Activated CD8-positive, alpha-beta T cell treated with anti-CD3 and anti-CD28 coated beads for 36 hours (primary cell): ENCODE measurements at regions of chr2 and their contacts with region 1.

Region 1: GRCh38 chr2:64214281-64215115 is 70.3 kb upstream of the PELI1 start:
- DNase-seq: peak; percentile 45
- ATAC-seq: peak; percentile 67
- H3K4me3 Mint-ChIP-seq: peak overlapping the region; percentile 63
- H3K27ac Mint-ChIP-seq: peak overlapping the region; percentile 97
- H3K4me1 Mint-ChIP-seq: peaks cover 55% of the 10 kb centered on the region
- H3K27me3 Mint-ChIP-seq: no peaks in the 10 kb centered on the region
- CTCF ChIP-seq: no peak

Region 2: GRCh38 chr2:64036034-64036705 is 178.3 kb before region 1 on chr2:
- CTCF ChIA-PET with region 1: no interaction called
- POLR2A ChIA-PET with region 1: no interaction called
- intact Hi-C with region 1: loop called (anchors 5 kb)
- DNase-seq: peak; percentile 47
- ATAC-seq: peak; percentile 93
- H3K4me3 Mint-ChIP-seq: peak overlapping the region; percentile 47
- H3K27ac Mint-ChIP-seq: peak overlapping the region; percentile 84
- H3K4me1 Mint-ChIP-seq: peaks cover 44% of the 10 kb centered on the region
- H3K27me3 Mint-ChIP-seq: no peaks in the 10 kb centered on the region
- CTCF ChIP-seq: no peak

Region 3: DNA sequence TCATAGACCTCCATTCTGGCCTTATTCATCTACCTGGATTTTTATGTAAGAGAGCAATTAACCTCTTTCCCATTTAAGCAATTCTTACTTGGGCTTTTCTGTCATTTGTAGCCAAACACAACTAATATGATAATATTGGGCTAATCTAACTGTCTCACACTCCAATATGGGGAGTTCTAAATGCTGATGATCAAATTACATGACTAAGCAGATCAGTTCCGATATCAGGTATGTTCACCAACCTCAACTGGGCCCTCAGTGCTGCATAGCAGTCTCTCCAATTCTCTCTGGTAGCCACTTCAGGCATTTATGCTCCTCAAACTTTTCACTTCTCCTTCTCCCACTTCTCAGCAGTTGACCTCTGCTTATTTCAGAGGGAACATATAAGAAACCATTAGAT is 134.3 kb before region 1 on chr2:
- CTCF ChIA-PET with region 1: no interaction called
- POLR2A ChIA-PET with region 1: no interaction called
- intact Hi-C with region 1: no loop called
- DNase-seq: no peak
- ATAC-seq: no peak
- H3K4me3 Mint-ChIP-seq: no peak overlapping the region
- H3K27ac Mint-ChIP-seq: no peak overlapping the region
- H3K4me1 Mint-ChIP-seq: no peaks in the 10 kb centered on the region
- H3K27me3 Mint-ChIP-seq: peaks cover 2% of the 10 kb centered on the region
- CTCF ChIP-seq: no peak

Region 4: DNA sequence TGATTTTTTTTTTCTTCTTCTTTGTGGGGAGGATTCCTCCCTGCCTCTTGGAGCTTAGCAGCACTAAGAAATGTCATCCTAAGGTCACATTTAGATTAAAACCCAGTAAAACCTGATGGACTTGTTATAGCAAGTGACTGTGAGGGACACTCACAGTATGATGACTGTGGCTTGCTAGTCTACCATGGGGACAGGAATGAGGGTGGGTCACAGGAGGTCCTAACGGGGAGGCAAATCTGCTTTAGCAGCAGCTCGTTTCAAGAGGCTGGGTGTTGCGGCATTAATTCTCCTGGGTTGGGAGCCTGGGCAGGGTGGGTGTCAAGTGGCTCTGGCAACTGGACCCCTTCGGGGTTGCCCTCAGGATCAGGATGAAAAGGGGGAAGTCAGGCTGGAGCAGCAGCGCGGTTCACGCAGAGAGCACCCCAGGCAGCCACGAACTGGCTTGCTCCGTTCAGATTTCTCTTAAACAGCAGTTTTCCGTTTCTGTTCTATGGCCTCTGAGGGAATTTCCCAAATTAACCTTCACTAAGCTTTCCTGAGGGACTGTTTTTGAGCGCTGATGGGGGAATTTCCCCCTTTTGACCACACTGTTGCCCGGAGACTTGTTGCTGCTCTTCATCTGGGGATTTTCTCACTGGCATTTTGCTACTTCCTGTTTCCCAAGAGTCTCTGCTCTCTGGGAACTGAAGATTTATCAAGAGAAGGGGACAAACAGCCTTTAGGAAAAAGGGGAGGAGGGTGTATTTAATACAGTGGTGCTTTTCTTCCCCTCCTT is 10.5 kb before region 1 on chr2:
- CTCF ChIA-PET with region 1: interaction called, 5 read pairs
- POLR2A ChIA-PET with region 1: interaction called, 16 read pairs
- intact Hi-C with region 1: no loop called
- DNase-seq: peak; percentile 63
- ATAC-seq: peak; percentile 46
- H3K4me3 Mint-ChIP-seq: peak overlapping the region; percentile 64
- H3K27ac Mint-ChIP-seq: peak overlapping the region; percentile 92
- H3K4me1 Mint-ChIP-seq: peaks cover 71% of the 10 kb centered on the region
- H3K27me3 Mint-ChIP-seq: no peaks in the 10 kb centered on the region
- CTCF ChIP-seq: no peak

Region 5: GRCh38 chr2:64228126-64228678 is 13.7 kb after region 1 on chr2:
- CTCF ChIA-PET with region 1: interaction called, 14 read pairs
- POLR2A ChIA-PET with region 1: interaction called, 16 read pairs
- intact Hi-C with region 1: no loop called
- DNase-seq: peak; percentile 77
- ATAC-seq: peak; percentile 90
- H3K4me3 Mint-ChIP-seq: peak overlapping the region; percentile 81
- H3K27ac Mint-ChIP-seq: peak overlapping the region; percentile 88
- H3K4me1 Mint-ChIP-seq: peaks cover 20% of the 10 kb centered on the region
- H3K27me3 Mint-ChIP-seq: peaks cover 1% of the 10 kb centered on the region
- CTCF ChIP-seq: no peak

Region 6: DNA sequence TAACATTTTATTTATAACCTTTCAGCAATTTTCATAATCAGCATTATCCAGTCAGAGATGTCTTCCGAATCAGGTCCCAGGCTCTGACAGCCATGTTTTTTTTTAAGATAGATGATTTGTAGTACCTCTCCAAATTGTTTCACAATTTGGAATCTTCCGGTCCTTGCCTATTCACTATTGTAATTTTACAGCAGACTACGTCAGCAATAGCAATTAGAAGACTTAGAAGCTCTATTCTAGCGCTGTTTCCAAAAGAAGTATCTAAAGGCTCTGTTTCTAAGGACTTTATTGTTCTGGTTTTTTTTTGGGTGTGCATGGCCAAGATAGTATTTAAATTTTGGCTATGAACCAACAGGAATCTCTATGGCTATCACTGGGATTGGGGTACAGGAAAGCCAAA is 24.3 kb after region 1 on chr2:
- CTCF ChIA-PET with region 1: no interaction called
- POLR2A ChIA-PET with region 1: no interaction called
- intact Hi-C with region 1: no loop called
- DNase-seq: no peak
- ATAC-seq: no peak
- H3K4me3 Mint-ChIP-seq: no peak overlapping the region
- H3K27ac Mint-ChIP-seq: no peak overlapping the region
- H3K4me1 Mint-ChIP-seq: peaks cover 8% of the 10 kb centered on the region
- H3K27me3 Mint-ChIP-seq: no peaks in the 10 kb centered on the region
- CTCF ChIP-seq: no peak

Region 7: DNA sequence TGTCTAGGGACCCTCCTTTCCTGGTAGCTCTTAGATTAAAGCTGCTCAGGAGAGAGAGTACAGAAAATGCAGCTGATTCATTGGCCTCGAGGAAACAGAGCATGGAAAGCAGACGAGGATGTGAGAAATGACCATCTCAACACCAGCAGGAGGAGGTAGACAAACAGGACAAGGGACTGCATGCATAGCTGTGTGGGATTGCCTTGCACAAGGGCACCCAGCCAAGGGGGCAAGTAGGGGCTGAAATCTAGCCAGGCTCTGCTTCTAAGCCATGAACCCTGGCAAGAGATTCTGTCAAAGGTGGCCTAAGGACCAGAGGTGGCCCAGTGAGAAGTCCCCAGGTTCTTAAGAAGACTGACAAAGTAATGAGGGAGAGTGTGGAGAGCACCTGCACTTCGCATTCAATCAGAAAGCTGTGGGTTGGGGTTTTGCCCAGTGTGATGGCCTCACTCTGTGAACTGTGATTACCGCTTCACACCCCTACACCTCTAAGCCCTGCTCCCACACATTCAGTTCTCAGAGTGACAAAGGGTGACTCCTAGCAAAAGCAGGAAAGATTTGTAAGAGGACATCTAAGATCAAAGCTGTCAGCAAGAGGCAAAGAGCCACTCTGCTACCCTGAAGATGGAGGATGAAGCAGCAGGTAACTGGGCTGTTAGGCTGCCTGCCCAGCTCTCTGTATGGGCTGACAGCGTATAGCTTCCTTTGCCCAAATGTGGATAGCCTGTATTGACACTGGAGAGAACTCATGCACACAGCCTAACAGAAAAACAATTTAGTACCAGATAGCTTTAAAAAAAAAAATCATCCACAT is 81.0 kb after region 1 on chr2:
- CTCF ChIA-PET with region 1: interaction called, 5 read pairs
- POLR2A ChIA-PET with region 1: interaction called, 13 read pairs
- intact Hi-C with region 1: no loop called
- DNase-seq: peak; percentile 77
- ATAC-seq: peak; percentile 94
- H3K4me3 Mint-ChIP-seq: no peak overlapping the region
- H3K27ac Mint-ChIP-seq: no peak overlapping the region
- H3K4me1 Mint-ChIP-seq: peaks cover 24% of the 10 kb centered on the region
- H3K27me3 Mint-ChIP-seq: peaks cover 1% of the 10 kb centered on the region
- CTCF ChIP-seq: no peak

Region 8: DNA sequence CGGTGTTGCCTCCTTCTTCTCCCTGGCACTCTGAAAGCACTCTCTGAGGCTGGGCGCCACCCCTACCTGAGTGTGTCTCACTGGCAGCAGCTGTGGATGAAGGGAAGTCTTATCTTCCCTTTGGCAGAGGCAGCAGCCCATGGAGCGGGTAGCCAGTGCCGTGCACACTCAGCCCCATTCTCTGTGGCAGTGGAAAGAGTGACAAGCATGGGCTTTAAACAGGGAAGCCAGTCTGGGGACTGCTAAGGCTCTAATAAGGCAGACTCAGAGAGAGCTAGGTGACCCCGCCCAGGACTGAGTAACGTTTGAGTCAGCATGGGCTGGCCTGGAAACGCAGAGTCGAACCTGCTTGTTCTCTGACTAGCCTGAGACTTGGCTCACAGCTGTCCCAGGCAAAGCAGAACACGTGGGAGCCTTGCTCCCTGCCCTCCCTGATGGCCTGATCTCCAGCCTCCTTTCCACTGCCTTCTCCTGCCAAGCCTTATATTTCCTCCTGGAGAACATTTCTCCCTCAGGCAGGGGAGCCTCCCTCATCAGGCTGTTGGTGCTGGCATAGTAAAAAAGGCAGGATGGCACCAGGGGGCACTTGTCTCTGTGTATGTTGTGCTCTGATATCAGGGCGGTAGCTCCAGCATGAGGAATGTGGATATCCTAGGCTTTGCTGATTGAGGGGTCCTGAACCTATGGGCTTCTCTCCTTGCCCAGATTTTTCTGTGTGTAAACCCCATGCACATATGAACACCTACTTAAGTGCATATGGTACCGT is 145.6 kb after region 1 on chr2:
- CTCF ChIA-PET with region 1: no interaction called
- POLR2A ChIA-PET with region 1: no interaction called
- intact Hi-C with region 1: no loop called
- DNase-seq: peak; percentile 74
- ATAC-seq: peak; percentile 97
- H3K4me3 Mint-ChIP-seq: no peak overlapping the region
- H3K27ac Mint-ChIP-seq: no peak overlapping the region
- H3K4me1 Mint-ChIP-seq: peaks cover 4% of the 10 kb centered on the region
- H3K27me3 Mint-ChIP-seq: peaks cover 15% of the 10 kb centered on the region
- CTCF ChIP-seq: no peak

Region 9: DNA sequence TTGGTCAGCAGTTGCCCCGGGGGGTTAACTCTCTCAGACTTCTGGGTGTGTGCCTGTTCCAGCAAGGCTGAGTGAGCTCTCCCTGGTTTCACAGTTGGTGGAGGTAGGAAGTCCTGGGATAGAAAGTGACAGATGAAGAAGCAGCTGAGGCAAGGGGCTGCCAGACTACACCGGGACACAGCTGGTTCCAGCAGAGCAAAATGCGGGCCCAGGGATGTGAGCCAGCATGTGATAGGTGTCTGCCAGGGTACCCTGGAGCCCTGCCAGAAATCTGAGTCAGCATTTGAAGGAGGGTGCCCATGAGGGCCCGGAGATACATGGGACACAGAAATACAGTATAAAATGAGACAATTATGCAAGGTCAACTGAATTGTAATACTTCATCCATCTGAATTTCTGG is 160.2 kb after region 1 on chr2:
- CTCF ChIA-PET with region 1: no interaction called
- POLR2A ChIA-PET with region 1: no interaction called
- intact Hi-C with region 1: no loop called
- DNase-seq: no peak
- ATAC-seq: no peak
- H3K4me3 Mint-ChIP-seq: no peak overlapping the region
- H3K27ac Mint-ChIP-seq: no peak overlapping the region
- H3K4me1 Mint-ChIP-seq: no peaks in the 10 kb centered on the region
- H3K27me3 Mint-ChIP-seq: no peaks in the 10 kb centered on the region
- CTCF ChIP-seq: no peak